GM13977 (cell line): ENCODE measurements at regions of chr17 and their contacts with region 1.

Region 1: DNA sequence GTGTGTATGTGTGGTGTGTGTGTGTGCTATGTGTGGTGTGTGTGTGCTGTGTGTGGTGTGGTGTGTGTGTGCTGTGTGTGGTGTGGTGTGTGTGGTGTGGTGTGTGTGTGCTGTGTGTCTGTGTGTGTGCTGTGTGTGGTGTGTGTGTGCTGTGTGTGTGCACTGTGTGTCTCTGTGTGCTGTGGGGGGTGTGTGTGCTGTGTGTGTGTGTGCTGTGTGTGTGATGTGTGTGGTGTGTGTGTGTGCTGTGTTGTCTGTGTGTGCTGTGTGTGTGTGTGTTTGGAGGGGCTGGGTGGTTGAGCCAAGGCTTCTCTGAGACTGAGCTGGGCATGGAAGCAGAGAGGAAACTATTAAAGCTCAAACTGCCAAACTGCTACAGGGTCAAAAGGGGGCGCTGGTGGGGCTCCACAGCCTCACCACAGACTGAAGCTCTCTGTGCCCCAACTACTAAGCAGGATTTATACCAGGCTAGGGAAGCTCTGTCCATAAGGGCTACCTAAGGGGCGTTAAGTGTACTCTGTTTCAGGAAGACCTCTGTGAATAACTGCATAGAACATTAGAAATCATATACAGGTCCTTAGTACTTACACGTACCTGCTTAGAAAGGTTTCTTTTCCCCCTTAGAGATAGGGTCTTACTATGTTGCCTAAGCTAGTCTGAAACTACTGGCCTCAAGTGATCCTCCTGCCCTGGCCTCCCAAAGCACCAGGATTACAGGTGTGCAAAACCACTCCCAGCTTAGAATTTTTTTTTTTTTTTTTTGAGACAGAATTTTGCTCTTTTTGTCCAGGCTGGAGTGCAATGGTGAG is 27.8 kb upstream of the GHDC start:
- DNase-seq: peak; percentile 72
- CTCF ChIP-seq: peak; percentile 86

Region 2: GRCh38 chr17:41635121-41636097 is 586.7 kb before region 1 on chr17:
- in situ Hi-C with region 1: no loop called
- DNase-seq: no peak
- CTCF ChIP-seq: no peak

Region 3: DNA sequence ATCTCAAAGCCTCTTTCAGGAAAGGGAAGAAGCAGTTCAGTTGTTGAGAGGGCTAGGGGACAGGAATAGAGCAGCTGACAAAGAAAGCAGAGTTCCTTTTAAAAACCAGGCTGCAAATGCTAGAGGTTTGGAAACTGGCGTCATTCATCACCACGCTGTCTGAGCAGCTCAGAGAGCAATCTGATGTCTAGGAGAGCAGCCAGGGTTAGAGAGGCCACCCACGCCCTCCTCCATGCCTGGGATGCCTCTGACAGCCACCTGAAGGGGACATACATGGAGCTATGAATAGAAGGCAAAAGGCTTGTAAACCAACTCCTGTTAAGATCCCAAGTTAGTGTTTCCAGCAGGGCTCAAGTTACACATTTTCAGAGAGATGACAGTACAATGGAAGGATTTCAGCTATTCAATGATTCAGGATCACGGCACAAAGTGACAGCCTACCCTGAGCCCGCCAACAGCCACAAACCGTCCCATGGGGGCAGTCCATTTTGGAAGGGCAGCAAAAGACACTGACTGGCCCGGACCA is 79.7 kb before region 1 on chr17:
- in situ Hi-C with region 1: no loop called
- DNase-seq: no peak
- CTCF ChIP-seq: no peak

Region 4: DNA sequence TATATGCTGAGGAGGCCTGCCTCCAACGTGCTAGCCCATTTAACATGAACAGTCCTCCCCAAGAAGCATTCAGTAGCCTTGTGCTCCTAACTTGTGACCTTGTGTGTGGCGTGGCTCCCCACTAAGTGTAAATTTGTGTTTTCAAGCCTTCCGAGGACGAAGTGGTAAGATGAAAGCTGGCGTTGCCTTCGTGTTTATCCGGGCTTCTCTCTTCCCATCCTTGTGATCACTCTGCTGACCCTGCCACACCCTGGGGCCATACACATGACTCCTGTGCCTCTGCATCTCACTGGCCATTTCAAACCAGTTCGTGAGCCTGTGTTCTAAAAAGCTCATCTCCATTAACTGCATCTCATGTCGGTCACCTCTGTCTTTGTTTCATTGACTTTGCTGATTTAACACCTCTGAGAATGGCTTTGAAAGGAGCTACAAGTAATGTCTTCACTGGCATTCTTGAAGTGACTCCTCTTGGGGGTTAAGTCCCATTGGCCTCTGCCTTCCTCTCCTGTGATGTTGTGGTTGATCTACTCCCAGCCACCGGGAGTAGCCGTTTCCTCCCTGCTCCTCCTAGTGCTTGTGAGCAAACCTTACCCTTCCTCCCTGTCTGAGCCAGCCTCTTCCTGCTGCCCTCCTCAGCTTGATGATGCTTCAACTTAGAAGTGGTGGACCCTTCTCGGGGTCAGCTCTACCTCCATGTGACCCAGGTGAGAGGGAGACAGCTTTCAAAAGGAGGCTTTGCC is 286.5 kb after region 1 on chr17:
- in situ Hi-C with region 1: loop called (anchors 10 kb)
- DNase-seq: no peak
- CTCF ChIP-seq: no peak